ENCODE measurements at regions of chr17 and their contacts with region 1.

Region 1: GRCh38 chr17:36183001-36183971 is 6.8 kb upstream of the TBC1D3B start:
- DNase-seq: peak; percentile 55 to 83
- ATAC-seq: peak; percentile 47 to 73 (median 52)
- H3K4me3 ChIP-seq: peak overlapping the region; percentile 65
- H3K27ac ChIP-seq: no peak overlapping the region
- H3K4me1 ChIP-seq: no peaks in the 10 kb centered on the region
- H3K27me3 ChIP-seq: peaks cover 0 to 45% (median 0%) of the 10 kb centered on the region in 3 donors
- CTCF ChIP-seq: no peak

Region 2: DNA sequence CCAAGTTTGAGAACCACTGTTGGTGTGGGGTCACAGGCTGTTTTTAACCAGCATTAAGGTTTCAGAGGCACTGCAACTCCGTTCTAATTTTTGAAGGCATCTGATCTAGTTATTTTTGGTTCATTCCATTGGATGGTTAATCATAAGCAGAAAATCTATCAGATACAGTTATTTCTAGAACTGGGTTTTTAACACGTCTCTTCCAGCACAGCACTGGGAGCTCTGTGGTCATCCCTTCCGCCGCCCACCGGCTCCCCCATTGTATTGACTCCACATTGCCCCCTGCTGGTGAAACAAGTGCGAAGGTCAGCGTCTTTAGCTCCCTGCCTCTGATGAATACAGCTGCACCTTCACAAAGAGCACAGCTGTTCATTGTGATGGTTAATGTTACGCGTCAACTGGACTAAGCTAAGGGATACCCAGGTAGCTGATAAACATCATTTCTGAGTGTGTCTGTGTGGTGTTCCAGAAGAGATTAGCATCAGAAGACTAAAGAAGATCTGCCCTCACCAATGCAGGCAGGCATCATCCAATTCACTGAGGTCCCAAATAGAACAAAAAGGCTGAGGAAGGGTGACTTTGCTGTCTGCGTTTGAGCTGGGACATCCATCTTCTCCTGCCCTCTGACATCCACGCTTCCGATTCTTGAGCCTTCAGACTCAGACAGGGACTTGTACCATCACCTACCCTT is 110.7 kb before region 1 on chr17:
- intact Hi-C with region 1: no loop called
- DNase-seq: peak; percentile 22 to 63
- ATAC-seq: no peak
- H3K4me3 ChIP-seq: no peak overlapping the region
- H3K27ac ChIP-seq: no peak overlapping the region
- H3K4me1 ChIP-seq: no peaks in the 10 kb centered on the region
- H3K27me3 ChIP-seq: no peaks in the 10 kb centered on the region
- CTCF ChIP-seq: peak; percentile 49

Region 3: GRCh38 chr17:36107660-36108059 is 75.6 kb before region 1 on chr17:
- intact Hi-C with region 1: loop called (anchors 1 kb)
- DNase-seq: no peak
- ATAC-seq: no peak
- H3K4me3 ChIP-seq: no peak overlapping the region
- H3K27ac ChIP-seq: no peak overlapping the region
- H3K4me1 ChIP-seq: no peaks in the 10 kb centered on the region
- H3K27me3 ChIP-seq: peaks cover 0 to 7% (median 3%) of the 10 kb centered on the region in 3 donors
- CTCF ChIP-seq: no peak

Region 4: GRCh38 chr17:36214918-36215317 is 31.6 kb after region 1 on chr17:
- intact Hi-C with region 1: no loop called
- DNase-seq: no peak
- ATAC-seq: no peak
- H3K4me3 ChIP-seq: no peak overlapping the region
- H3K27ac ChIP-seq: no peak overlapping the region
- H3K4me1 ChIP-seq: no peaks in the 10 kb centered on the region
- H3K27me3 ChIP-seq: no peaks in the 10 kb centered on the region
- CTCF ChIP-seq: no peak

Measured in psoas muscle (tissue), 8 donors.